Activated CD8-positive, alpha-beta T cell treated with anti-CD3 and anti-CD28 coated beads for 36 hours (primary cell): ENCODE measurements at regions of chr17 and their contacts with region 1.

Region 1: GRCh38 chr17:29148790-29149430 is 31.3 kb downstream of the MYO18A start:
- DNase-seq: peak; percentile 97
- ATAC-seq: peak; percentile 97
- H3K4me3 Mint-ChIP-seq: peak overlapping the region; percentile 72
- H3K27ac Mint-ChIP-seq: peak overlapping the region; percentile 87
- H3K4me1 Mint-ChIP-seq: peaks cover 54% of the 10 kb centered on the region
- H3K27me3 Mint-ChIP-seq: no peaks in the 10 kb centered on the region
- CTCF ChIP-seq: peak; percentile 93

Region 2: DNA sequence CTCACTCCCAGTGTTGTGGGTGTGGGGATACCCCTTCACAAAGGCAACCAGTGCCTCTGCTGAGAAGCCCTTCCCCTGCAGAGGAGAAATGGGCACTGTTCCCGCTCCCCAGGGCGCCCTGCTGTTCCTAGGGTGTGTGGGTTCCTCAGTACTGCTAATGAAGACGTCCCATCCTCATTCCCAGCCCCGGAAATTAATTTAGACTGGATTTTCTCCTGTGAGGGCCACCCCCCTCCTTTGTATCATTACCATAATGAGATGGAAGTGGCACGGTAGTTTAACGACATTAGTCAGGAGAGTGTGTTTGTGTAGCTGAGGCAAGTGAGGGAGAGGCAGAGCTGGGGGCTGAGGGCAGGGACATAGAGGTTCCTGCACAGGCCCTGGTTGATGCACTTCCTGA is 52.8 kb before region 1 on chr17:
- CTCF ChIA-PET with region 1: no interaction called
- POLR2A ChIA-PET with region 1: no interaction called
- intact Hi-C with region 1: no loop called
- DNase-seq: no peak
- ATAC-seq: no peak
- H3K4me3 Mint-ChIP-seq: no peak overlapping the region
- H3K27ac Mint-ChIP-seq: no peak overlapping the region
- H3K4me1 Mint-ChIP-seq: peaks cover 11% of the 10 kb centered on the region
- H3K27me3 Mint-ChIP-seq: no peaks in the 10 kb centered on the region
- CTCF ChIP-seq: no peak

Region 3: GRCh38 chr17:29111816-29112499 is 37.0 kb before region 1 on chr17:
- CTCF ChIA-PET with region 1: interaction called, 609 read pairs
- POLR2A ChIA-PET with region 1: interaction called, 4 read pairs
- intact Hi-C with region 1: no loop called
- DNase-seq: peak; percentile 79
- ATAC-seq: peak; percentile 87
- H3K4me3 Mint-ChIP-seq: no peak overlapping the region
- H3K27ac Mint-ChIP-seq: no peak overlapping the region
- H3K4me1 Mint-ChIP-seq: peaks cover 9% of the 10 kb centered on the region
- H3K27me3 Mint-ChIP-seq: no peaks in the 10 kb centered on the region
- CTCF ChIP-seq: peak; percentile 91

Region 4: GRCh38 chr17:29168079-29168758 is 19.3 kb after region 1 on chr17:
- CTCF ChIA-PET with region 1: interaction called, 355 read pairs
- POLR2A ChIA-PET with region 1: no interaction called
- intact Hi-C with region 1: no loop called
- DNase-seq: no peak
- ATAC-seq: no peak
- H3K4me3 Mint-ChIP-seq: no peak overlapping the region
- H3K27ac Mint-ChIP-seq: no peak overlapping the region
- H3K4me1 Mint-ChIP-seq: no peaks in the 10 kb centered on the region
- H3K27me3 Mint-ChIP-seq: no peaks in the 10 kb centered on the region
- CTCF ChIP-seq: no peak

Region 5: GRCh38 chr17:29212681-29213121 is 63.8 kb after region 1 on chr17:
- CTCF ChIA-PET with region 1: interaction called, 279 read pairs
- POLR2A ChIA-PET with region 1: no interaction called
- intact Hi-C with region 1: no loop called
- DNase-seq: no peak
- ATAC-seq: no peak
- H3K4me3 Mint-ChIP-seq: no peak overlapping the region
- H3K27ac Mint-ChIP-seq: no peak overlapping the region
- H3K4me1 Mint-ChIP-seq: no peaks in the 10 kb centered on the region
- H3K27me3 Mint-ChIP-seq: no peaks in the 10 kb centered on the region
- CTCF ChIP-seq: no peak

Region 6: GRCh38 chr17:29293890-29294579 is 145.1 kb after region 1 on chr17 and contains the start of gene NUFIP2:
- CTCF ChIA-PET with region 1: interaction called, 21 read pairs
- POLR2A ChIA-PET with region 1: interaction called, 6 read pairs
- intact Hi-C with region 1: loop called (anchors 5 kb)
- DNase-seq: peak; percentile 99
- ATAC-seq: peak; percentile 91
- H3K4me3 Mint-ChIP-seq: peak within 1 kb of the TSS; percentile 100
- H3K27ac Mint-ChIP-seq: peak within 1 kb of the TSS; percentile 100
- H3K4me1 Mint-ChIP-seq: peaks cover 28% of the 10 kb centered on the region
- H3K27me3 Mint-ChIP-seq: no peaks in the 10 kb centered on the region
- CTCF ChIP-seq: no peak
- total RNA-seq, gene NUFIP2: 49.5 to 56.4 TPM